ENCODE measurements at regions of chr1 and their contacts with region 1.

Region 1: DNA sequence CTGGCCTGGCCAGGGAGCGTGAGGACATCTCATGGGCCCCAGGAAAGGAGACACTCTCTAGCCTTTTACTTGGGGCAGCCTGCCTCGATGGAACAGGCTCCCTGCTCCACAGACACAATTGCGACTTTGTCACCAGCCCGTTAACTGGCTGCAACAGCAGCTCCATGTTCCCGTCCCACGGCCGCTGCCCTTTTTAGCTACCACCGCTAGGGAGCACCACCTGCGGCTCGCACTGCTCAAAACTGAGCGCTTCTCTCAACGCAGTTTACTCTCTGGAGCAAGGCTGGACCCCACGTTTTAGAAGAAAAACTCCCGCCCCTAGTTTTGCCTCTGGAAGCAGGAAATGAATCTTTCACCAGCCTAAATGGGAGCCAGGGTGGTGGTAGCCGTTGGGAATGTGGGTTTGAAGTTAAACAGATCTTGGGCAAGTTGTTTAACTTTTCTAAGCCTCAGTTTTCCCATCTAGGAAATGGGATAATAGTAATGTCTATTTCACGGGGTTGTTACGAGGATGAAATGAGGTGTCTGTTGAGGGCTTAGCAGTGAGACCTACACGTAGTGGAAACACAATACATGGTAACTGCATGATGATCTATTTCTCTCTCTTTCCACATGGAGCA is 3.5 kb upstream of the LRRC38 start:
- DNase-seq: peak in 1 of 2 experiments; percentile 79
- H3K4me3 ChIP-seq: no peak overlapping the region
- H3K27ac ChIP-seq: no peak overlapping the region
- H3K4me1 ChIP-seq: peaks cover 0 to 8% (median 3%) of the 10 kb centered on the region in 4 experiments; a peak in 4 of 7 replicates
- H3K27me3 ChIP-seq: peaks cover 17 to 54% (median 38%) of the 10 kb centered on the region in 4 experiments
- CTCF ChIP-seq: peak; percentile 76 to 89 (median 85)
- EP300 ChIP-seq: no peak
- POLR2A ChIP-seq: no peak
- RAD21 ChIP-seq: peak; percentile 71 to 74

Region 2: GRCh38 chr1:13507075-13507474 is 10.2 kb before region 1 on chr1:
- CTCF ChIA-PET with region 1: interaction called, 11 read pairs
- POLR2A ChIA-PET with region 1: no interaction called
- DNase-seq: no peak
- H3K4me3 ChIP-seq: no peak overlapping the region
- H3K27ac ChIP-seq: no peak overlapping the region
- H3K4me1 ChIP-seq: peaks cover 0 to 12% (median 5%) of the 10 kb centered on the region in 4 experiments; a peak in 4 of 7 replicates
- H3K27me3 ChIP-seq: peaks cover 8 to 22% (median 18%) of the 10 kb centered on the region in 4 experiments
- CTCF ChIP-seq: no peak
- EP300 ChIP-seq: no peak
- POLR2A ChIP-seq: no peak
- RAD21 ChIP-seq: no peak

Region 3: DNA sequence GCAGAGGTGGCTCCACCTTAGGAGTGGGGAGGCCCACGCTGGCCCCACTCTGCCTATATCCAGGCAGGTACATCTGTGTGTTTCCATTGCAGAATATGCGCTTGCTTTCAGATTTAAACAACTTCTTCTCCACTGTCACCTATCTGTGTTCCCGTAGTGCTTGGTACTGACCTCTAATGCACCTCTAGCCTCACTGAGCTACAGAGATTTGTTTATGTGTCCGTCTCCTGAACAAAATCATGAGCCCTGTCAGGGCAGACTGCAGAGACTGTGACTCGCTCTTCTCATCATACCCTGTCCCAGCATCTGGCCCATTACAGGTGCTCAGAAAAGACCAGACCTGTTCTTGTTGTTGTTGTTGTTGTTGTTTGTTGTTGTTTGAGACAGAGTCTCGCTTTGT is 11.0 kb after region 1 on chr1:
- CTCF ChIA-PET with region 1: interaction called, 16 read pairs
- POLR2A ChIA-PET with region 1: interaction called, 4 read pairs
- DNase-seq: no peak
- H3K4me3 ChIP-seq: no peak overlapping the region
- H3K27ac ChIP-seq: no peak overlapping the region
- H3K4me1 ChIP-seq: no peaks in the 10 kb centered on the region
- H3K27me3 ChIP-seq: no peaks in the 10 kb centered on the region
- CTCF ChIP-seq: no peak
- EP300 ChIP-seq: no peak
- POLR2A ChIP-seq: no peak
- RAD21 ChIP-seq: no peak